ENCODE measurements at regions of chr1 and their contacts with region 1.

Region 1: GRCh38 chr1:17520071-17520813 is 19.3 kb upstream of the ARHGEF10L start:
- DNase-seq: peak; percentile 91
- H3K4me3 ChIP-seq: peak overlapping the region; percentile 27
- H3K27ac ChIP-seq: peak overlapping the region; percentile 73
- H3K4me1 ChIP-seq: peaks cover 6% of the 10 kb centered on the region
- H3K27me3 ChIP-seq: no peaks in the 10 kb centered on the region
- CTCF ChIP-seq: no peak

Region 2: GRCh38 chr1:17596651-17597509 is 76.6 kb after region 1 on chr1:
- intact Hi-C with region 1: loop called (anchors 5 kb)
- DNase-seq: peak; percentile 85
- H3K4me3 ChIP-seq: no peak overlapping the region
- H3K27ac ChIP-seq: peak overlapping the region; percentile 96
- H3K4me1 ChIP-seq: peaks cover 27% of the 10 kb centered on the region
- H3K27me3 ChIP-seq: no peaks in the 10 kb centered on the region
- CTCF ChIP-seq: no peak